Esophagus muscularis mucosa (tissue), 4 donors: ENCODE measurements at regions of chr18 and their contacts with region 1.

Region 1: DNA sequence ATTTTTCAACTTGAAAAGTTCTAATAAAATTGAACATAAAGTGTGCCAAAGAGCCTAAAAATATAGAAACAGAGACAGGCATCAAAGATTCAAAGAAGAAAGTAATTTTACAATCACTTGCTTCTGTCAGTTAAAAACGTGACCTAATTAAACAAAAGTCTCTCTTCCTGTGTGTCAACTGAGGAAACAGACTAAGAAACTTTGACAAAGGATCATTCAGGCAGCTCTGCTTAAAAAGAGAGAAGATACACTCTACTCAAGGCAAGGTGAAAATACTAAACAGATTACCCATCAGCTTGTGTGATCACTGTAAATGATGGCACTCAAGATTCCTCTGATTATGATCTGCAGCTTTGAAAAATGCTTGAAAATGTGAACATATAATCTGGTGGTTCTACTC is 47.8 kb downstream of the DYM start:
- DNase-seq: no peak
- H3K4me3 ChIP-seq: no peak overlapping the region
- H3K27ac ChIP-seq: peak overlapping the region in 1 of 4 donors; percentile 12
- H3K4me1 ChIP-seq: peaks cover 8 to 40% (median 27%) of the 10 kb centered on the region in 4 donors
- H3K27me3 ChIP-seq: no peaks in the 10 kb centered on the region
- CTCF ChIP-seq: no peak
- EP300 ChIP-seq: no peak
- POLR2A ChIP-seq: no peak

Region 2: GRCh38 chr18:49250816-49251388 is 161.8 kb before region 1 on chr18:
- intact Hi-C with region 1: loop called (anchors 5 kb)
- DNase-seq: no peak
- H3K4me3 ChIP-seq: no peak overlapping the region
- H3K27ac ChIP-seq: no peak overlapping the region
- H3K4me1 ChIP-seq: peaks cover 0 to 19% (median 5%) of the 10 kb centered on the region in 4 donors
- H3K27me3 ChIP-seq: no peaks in the 10 kb centered on the region
- CTCF ChIP-seq: peak; percentile 30 to 52 (median 33)
- EP300 ChIP-seq: no peak
- POLR2A ChIP-seq: no peak